Left cardiac atrium (tissue), 4 donors: ENCODE measurements at regions of chr14 and their contacts with region 1.

Region 1: DNA sequence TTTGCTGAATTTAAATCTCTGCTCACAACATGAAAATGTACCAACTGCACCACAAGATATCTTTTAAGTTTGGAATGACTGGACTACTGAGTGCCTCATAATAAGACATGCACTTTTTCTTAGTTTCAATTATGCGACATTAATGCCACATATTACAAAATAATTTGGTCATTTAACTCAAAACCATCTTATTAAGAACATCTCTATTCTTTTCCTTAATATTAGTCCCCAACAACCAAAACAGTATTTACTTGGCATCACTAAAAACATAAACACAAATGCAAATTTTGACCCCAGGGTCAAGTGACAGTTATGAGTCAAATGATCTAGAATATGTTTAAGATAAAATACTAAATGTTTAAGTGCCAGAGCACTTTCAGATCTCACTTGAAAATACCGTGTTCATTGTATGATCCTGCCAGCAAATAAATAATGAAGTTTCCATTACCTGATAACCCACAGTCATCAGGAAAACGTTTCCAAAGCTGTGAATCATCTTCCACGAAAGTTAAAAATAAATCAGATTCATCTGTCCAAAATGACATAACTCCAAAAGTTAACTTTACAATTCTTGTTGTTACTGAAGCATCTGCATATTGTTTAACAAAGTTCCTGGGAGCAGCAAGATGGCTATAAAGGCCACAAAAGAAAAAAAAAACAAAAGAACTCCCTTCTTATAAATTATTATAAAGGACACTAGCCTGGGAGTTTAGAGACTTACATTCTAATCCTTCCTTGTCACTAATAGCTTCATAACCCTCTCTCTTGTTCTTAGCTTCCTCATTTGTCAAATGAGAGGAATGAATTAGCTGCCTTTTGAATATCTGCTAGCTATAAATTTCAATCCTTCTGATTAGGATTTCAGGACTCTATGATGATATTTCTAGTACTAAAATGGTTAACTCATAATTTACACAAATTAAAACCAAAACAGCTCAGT is 30.5 kb upstream of the AP4S1 start:
- DNase-seq: no peak
- ATAC-seq: peak in 1 of 2 donors; percentile 69

Region 2: GRCh38 chr14:31026395-31027118 is 31.6 kb after region 1 on chr14:
- intact Hi-C with region 1: loop called in 1 of 2 experiments (anchors 5 kb)
- DNase-seq: peak; percentile 96
- ATAC-seq: peak; percentile 98